HepG2 (cell line): ENCODE measurements at regions of chr20 and their contacts with region 1.

Region 1: GRCh38 chr20:54103067-54103761 is 32.8 kb upstream of the BCAS1 start:
- DNase-seq: peak; percentile 96
- ATAC-seq: peak; percentile 63
- H3K4me3 ChIP-seq: peak overlapping the region in 2 of 3 experiments; percentile 24 to 39; a peak in 2 of 6 replicates
- H3K27ac ChIP-seq: peak overlapping the region; percentile 96
- H3K4me1 ChIP-seq: peaks cover 87% of the 10 kb centered on the region
- H3K27me3 ChIP-seq: no peaks in the 10 kb centered on the region
- CTCF ChIP-seq: peak; percentile 95
- EP300 ChIP-seq: peak; percentile 21 to 75; a peak in 3 of 4 replicates
- POLR2A ChIP-seq: no peak
- RAD21 ChIP-seq: peak; percentile 93

Region 2: DNA sequence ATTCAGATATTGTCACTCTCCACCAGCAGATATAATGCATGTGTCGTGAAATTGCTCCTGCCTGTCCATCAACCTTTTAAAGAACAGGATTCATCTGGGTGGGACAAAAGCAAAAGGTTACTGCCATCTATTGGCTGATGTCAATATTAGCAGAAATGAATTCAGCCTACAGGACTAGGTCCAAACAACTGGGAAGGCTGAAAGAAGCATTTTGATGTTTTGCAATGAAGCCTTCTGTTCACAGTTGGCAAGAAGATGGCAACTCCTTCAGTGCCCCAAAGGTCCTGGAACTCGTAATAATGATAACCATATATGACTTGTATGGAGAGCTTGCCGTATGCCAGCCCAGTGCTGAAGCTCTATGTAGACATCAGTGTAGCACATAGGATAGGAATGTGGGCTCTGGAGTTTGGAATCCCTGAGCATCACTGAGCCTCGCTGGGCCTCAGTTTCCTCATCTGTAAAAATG is 40.4 kb before region 1 on chr20:
- CTCF ChIA-PET with region 1: no interaction called
- POLR2A ChIA-PET with region 1: interaction called, 4 read pairs
- in situ Hi-C with region 1: no loop called
- intact Hi-C with region 1: loop called (anchors 1 kb)
- DNase-seq: peak; percentile 70
- ATAC-seq: peak; percentile 64
- H3K4me3 ChIP-seq: no peak overlapping the region
- H3K27ac ChIP-seq: no peak overlapping the region
- H3K4me1 ChIP-seq: peaks cover 16% of the 10 kb centered on the region
- H3K27me3 ChIP-seq: no peaks in the 10 kb centered on the region; a peak in 1 of 5 replicates
- CTCF ChIP-seq: peak; percentile 91
- EP300 ChIP-seq: no peak
- POLR2A ChIP-seq: no peak
- RAD21 ChIP-seq: peak; percentile 80

Region 3: DNA sequence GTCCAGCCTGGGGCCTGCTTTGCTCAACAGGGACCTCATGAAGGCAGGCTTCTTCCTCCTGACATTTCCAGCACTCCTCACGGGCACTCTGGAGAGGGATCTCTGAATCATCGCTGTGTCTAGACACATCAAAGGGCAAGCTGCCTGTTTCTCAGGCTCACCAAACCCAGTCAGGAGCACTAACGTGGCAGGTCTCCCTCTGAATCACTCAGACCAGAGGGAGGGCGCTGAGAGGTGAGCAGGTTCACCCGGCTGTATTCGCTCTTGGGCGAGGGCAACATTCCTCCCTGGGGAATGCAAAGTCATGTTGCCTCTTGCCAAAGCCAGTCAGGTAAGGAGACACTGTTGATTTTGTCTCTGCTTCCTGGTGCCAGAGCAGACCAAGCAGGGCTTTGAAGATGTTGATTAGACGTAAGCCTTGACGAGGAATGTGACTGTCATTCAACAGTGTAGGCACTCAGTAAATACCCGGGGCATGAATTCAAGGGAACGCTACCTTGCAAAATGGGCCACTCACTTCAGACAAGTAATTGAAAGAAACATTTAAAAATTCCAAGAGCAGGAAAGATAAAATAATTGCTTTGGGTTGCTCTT is 20.5 kb after region 1 on chr20:
- CTCF ChIA-PET with region 1: interaction called, 3 read pairs
- POLR2A ChIA-PET with region 1: interaction called, 145 read pairs
- in situ Hi-C with region 1: no loop called
- intact Hi-C with region 1: loop called (anchors 1 kb)
- DNase-seq: peak; percentile 100
- ATAC-seq: peak; percentile 98
- H3K4me3 ChIP-seq: peak overlapping the region in 2 of 3 experiments; percentile 30 to 59; a peak in 5 of 6 replicates
- H3K27ac ChIP-seq: peak overlapping the region; percentile 98
- H3K4me1 ChIP-seq: peaks cover 87% of the 10 kb centered on the region
- H3K27me3 ChIP-seq: no peaks in the 10 kb centered on the region
- CTCF ChIP-seq: peak; percentile 44; the same call in 1 of the 2 replicates
- EP300 ChIP-seq: peak; percentile 99 to 100
- POLR2A ChIP-seq: peak; percentile 77 to 97
- RAD21 ChIP-seq: peak; percentile 87

Region 4: DNA sequence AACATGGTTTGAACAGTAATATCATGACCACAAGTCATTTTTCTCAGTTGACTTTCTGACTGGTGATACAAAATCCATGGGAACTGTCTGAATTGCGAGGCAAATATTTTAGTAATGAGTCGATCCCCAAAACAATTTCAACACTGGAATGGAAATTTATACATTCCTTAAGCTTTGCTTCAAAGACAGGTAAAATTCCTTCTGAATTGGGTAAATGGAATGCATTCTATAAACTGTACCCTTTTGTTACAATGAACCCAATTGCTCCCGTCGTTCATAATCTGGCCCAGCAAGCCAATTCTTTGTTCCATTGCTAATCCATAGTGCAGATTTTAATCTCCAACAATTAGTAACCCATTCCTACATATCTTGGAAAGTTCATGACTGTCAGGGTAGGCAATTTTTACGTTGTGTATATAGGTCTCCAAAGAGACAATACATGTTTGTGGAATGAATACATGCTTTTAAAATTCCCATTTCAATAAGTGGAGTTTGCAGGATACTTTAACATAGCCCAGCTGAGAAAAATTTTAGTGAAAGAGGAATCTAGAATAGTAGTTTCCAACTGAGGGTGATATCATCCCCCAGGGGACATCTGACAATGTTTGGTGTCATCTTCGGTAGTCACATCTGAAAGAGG is 37.8 kb after region 1 on chr20:
- CTCF ChIA-PET with region 1: no interaction called
- POLR2A ChIA-PET with region 1: interaction called, 20 read pairs
- in situ Hi-C with region 1: no loop called
- intact Hi-C with region 1: loop called (anchors 1 kb)
- DNase-seq: peak; percentile 96
- ATAC-seq: peak; percentile 81
- H3K4me3 ChIP-seq: no peak overlapping the region
- H3K27ac ChIP-seq: peak overlapping the region; percentile 55
- H3K4me1 ChIP-seq: peaks cover 45% of the 10 kb centered on the region
- H3K27me3 ChIP-seq: no peaks in the 10 kb centered on the region
- CTCF ChIP-seq: no peak
- EP300 ChIP-seq: peak; percentile 69 to 75; a peak in 2 of 4 replicates
- POLR2A ChIP-seq: no peak
- RAD21 ChIP-seq: no peak

Region 5: GRCh38 chr20:54167909-54168872 is 65.0 kb after region 1 on chr20:
- CTCF ChIA-PET with region 1: no interaction called
- POLR2A ChIA-PET with region 1: interaction called, 22 read pairs
- in situ Hi-C with region 1: no loop called
- intact Hi-C with region 1: no loop called
- DNase-seq: peak; percentile 47
- ATAC-seq: peak; percentile 17; the same call in 2 of the 3 replicates
- H3K4me3 ChIP-seq: no peak overlapping the region
- H3K27ac ChIP-seq: no peak overlapping the region
- H3K4me1 ChIP-seq: peaks cover 47% of the 10 kb centered on the region
- H3K27me3 ChIP-seq: no peaks in the 10 kb centered on the region
- CTCF ChIP-seq: no peak
- EP300 ChIP-seq: no peak
- POLR2A ChIP-seq: no peak
- RAD21 ChIP-seq: no peak

Region 6: DNA sequence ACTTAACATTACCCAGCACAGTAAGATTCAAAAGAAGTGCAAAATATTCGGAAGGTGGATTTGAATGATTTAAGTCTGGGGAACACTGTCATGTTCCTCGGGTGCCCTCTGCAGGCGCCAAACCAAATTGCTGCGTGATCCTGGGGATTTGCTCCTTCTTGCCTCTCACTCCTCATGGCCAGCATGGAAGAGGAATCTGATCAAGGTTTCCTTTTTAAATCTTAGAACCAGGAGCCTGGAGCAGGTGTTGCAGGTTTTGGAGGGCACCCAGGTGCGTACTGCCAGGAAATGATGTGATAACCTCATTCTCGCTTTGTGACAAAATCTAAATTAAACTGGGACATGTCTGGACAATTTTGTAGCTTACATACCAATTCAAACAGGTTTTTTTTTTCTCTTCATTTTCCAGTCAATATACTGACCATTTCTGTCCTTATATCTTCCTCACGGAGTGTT is 96.5 kb after region 1 on chr20:
- CTCF ChIA-PET with region 1: interaction called, 358 read pairs
- POLR2A ChIA-PET with region 1: interaction called, 149 read pairs
- in situ Hi-C with region 1: loop called (anchors 5 kb)
- intact Hi-C with region 1: loop called (anchors 1 kb)
- DNase-seq: peak; percentile 82
- ATAC-seq: no peak
- H3K4me3 ChIP-seq: no peak overlapping the region
- H3K27ac ChIP-seq: no peak overlapping the region
- H3K4me1 ChIP-seq: peaks cover 51% of the 10 kb centered on the region
- H3K27me3 ChIP-seq: peaks cover 0 to 11% of the 10 kb centered on the region in 2 experiments; a peak in 1 of 5 replicates
- CTCF ChIP-seq: peak; percentile 95
- EP300 ChIP-seq: no peak
- POLR2A ChIP-seq: no peak
- RAD21 ChIP-seq: peak; percentile 97